Dorsolateral prefrontal cortex (tissue), 120 donors: ENCODE measurements at regions of chr7 and their contacts with region 1.

Region 1: GRCh38 chr7:36291387-36292316 is 98.0 kb upstream of the ANLN start:
- DNase-seq: peak; percentile 80 to 91 (median 86)
- H3K4me3 ChIP-seq: peak overlapping the region in 57 of 59 donors; percentile 4 to 60 (median 42)
- H3K27ac ChIP-seq: peak overlapping the region in 56 of 59 donors; percentile 4 to 88 (median 76)
- H3K27me3 ChIP-seq: no peaks in the 10 kb centered on the region
- CTCF ChIP-seq: peak; percentile 96 to 100 (median 99)

Region 2: DNA sequence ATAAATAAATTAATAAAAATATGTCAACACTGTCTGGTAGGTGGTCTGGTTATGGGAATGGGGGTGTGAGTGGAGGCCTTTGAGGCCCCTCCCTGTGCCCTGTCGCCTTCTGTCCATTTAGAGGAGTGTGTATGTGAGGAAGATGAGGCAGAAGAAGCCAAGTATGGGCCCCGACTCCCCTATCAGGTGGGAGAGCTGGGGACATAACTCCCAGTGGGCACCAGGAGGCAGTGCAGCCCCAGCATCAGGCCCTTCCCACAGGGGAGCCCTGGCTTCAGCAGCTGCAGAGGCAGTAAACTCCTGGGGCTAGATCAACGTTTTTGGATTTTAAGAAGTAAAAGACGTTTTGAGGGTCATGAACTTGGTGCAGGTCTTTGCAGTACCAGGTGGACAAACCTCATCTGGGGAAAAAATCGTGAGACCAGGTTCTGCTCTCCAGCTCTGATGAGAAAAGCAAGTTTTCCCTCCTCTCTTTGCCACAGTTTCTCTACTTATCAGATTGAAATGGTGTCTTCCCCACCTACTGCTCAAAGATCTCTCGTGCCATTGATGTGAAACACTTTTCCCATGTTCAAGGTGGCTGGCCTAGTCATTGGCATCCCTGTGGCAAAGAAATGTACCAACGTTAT is 306.4 kb before region 1 on chr7:
- intact Hi-C with region 1: loop called (anchors 1 kb)
- DNase-seq: peak; percentile 58 to 88 (median 81)
- H3K4me3 ChIP-seq: no peak overlapping the region
- H3K27ac ChIP-seq: no peak overlapping the region
- H3K27me3 ChIP-seq: no peaks in the 10 kb centered on the region
- CTCF ChIP-seq: peak; percentile 62 to 99 (median 94)

Region 3: DNA sequence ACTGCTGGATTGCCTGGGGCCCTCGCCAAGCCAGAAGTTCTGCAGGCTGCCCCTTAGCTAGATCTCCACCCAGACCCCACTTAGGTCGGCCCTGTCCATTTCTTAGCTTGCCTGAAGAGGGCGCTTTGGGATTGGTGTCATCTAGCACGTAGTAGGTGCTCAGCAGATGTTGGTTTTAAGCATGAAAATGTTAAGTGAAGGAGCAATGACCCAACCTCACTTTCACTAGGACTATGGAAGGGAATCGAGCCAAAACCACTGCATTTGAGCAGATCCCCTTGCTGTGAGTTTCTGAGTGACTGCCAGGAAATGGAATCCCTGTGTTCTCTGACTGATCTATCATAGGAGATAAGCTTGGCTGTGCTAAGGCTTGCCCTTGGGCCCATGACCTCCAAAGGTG is 270.3 kb before region 1 on chr7:
- intact Hi-C with region 1: loop called in 1 of 2 experiments (anchors 2 kb)
- DNase-seq: no peak
- H3K4me3 ChIP-seq: no peak overlapping the region
- H3K27ac ChIP-seq: no peak overlapping the region
- H3K27me3 ChIP-seq: no peaks in the 10 kb centered on the region
- CTCF ChIP-seq: peak in 42 of 56 donors; percentile 10 to 51 (median 28)

Region 4: DNA sequence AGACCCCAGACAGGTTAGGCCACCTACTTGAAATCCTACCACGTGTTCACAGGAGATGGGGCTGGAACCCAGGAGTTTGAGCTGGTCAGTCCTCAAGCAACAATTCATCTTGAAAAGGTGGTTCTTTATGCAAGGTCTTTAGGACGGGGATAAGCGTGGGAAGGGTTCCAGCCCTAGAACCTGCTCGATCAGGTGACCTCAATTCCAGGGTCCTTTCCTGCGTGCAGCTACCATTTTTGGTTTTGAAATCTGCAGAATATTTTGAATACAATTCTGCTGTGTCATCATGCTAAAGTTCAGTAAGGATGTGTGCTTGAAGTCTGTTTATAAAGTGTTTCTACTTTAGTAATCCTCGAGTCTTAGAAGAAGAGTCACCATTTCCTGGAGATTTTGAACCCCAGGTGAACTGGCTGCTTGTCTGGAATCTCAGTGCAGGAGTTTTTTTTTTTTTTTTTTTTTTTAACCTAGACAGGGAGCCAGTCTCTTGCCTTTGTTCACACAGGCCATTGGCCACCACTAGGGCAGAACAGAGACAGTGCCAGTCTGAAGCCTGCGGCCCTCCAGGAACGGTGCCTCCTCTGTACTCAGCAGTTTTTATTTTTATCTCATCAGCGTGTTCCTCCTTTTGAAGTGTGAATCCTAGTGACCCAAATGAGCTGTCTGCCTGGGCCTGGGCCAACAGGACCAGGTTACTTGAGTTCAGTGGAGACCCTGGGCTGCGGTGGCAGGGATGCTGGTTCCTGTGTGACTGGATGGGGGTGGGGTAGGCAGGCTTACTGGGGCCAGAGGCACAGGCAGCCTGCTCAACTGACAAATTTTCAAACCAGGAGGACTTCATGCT is 84.0 kb before region 1 on chr7:
- intact Hi-C with region 1: loop called (anchors 5 to 10 kb)
- DNase-seq: peak in 9 of 10 donors; percentile 13 to 71 (median 54)
- H3K4me3 ChIP-seq: no peak overlapping the region
- H3K27ac ChIP-seq: peak overlapping the region in 42 of 59 donors; percentile 4 to 80 (median 42)
- H3K27me3 ChIP-seq: no peaks in the 10 kb centered on the region
- CTCF ChIP-seq: peak in 31 of 56 donors; percentile 11 to 40 (median 27)

Region 5: DNA sequence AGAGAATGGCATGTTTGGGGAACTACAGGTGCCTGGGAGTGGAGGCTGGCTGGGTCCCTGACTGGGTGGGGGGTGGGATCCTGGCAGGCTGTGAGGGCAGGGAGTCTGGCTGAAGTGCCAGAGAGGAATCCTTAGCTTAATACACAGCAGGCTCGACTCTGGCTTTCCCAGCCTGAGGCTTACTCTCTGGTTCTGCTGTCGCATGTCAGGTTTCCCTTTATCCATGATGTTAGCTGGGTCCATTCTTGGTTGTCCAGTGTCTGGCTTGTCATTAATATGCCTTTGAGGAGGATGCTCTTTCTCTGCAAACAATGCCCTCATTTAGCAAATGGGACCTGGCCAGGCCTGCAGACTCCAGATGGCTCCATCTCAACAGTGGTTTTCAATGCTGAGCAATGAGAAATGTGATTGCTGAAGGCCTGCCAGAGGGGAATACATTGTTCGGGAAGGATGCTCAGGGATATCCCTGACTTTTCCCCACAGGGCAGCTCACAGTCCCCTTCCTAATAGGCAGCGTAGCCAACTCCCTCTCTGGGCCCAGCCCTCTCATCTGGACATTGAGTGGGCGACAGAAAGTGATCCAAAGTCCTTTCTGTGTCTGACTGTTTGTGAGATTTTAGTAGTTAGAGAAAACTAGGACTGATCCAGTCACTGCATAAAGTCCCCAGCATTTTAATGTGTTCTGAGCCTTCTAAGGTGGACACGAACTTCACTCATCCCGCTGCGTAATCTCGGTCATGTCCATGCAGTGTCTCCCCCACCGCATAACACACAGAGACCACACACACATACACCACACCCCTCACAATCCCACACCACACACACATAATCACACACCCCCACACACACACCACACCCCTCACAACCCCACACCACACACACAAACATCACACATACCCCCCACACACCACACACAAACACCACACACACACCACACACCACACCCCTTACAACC is 222.9 kb after region 1 on chr7:
- intact Hi-C with region 1: no loop called
- DNase-seq: peak; percentile 25 to 77 (median 56)
- H3K4me3 ChIP-seq: peak overlapping the region in 1 of 59 donors; percentile 42
- H3K27ac ChIP-seq: peak overlapping the region in 54 of 59 donors; percentile 2 to 87 (median 68)
- H3K27me3 ChIP-seq: no peaks in the 10 kb centered on the region
- CTCF ChIP-seq: peak in 12 of 56 donors; percentile 14 to 34 (median 21)